B cell (primary cell): ENCODE measurements at regions of chr2 and their contacts with region 1.

Region 1: GRCh38 chr2:24084386-24085361 is at the start of gene TP53I3:
- DNase-seq: peak; percentile 89
- ATAC-seq: peak; percentile 86
- H3K4me3 ChIP-seq: peak within 1 kb of the TSS; percentile 36 to 84 (median 68)
- H3K4me3 Mint-ChIP-seq: peak within 1 kb of the TSS; percentile 97
- H3K27ac ChIP-seq: peak within 1 kb of the TSS; percentile 58 to 69
- H3K27ac Mint-ChIP-seq: peak within 1 kb of the TSS; percentile 95
- H3K4me1 ChIP-seq: peaks cover 12 to 20% of the 10 kb centered on the region in 2 donors
- H3K4me1 Mint-ChIP-seq: peaks cover 19% of the 10 kb centered on the region
- H3K27me3 ChIP-seq: no peaks in the 10 kb centered on the region
- H3K27me3 Mint-ChIP-seq: no peaks in the 10 kb centered on the region
- CTCF ChIP-seq: peak; percentile 98
- total RNA-seq, gene TP53I3: 3.9 and 5.2 TPM in 2 replicates

Region 2: DNA sequence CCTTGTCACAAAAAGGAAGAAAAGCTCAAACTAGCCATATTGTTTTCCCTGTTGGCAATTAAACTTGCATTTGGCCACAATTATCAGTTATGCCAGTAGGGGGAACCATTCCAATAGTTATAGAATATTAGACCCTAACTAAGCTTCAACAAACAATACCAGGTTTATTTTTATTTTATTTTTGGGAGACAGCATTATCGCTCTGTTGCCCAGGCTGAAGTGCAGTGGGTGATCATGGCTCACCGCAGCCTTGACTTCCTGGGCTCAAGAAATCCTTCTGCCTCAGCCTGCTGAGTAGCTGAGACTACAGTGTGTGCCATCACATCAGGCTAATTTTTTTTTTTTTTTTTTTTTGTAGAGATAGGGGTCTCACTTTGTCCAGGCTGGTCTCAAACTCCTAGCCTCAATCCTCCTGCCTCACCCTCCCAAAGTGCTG is 259.9 kb before region 1 on chr2:
- CTCF ChIA-PET with region 1: interaction called, 154 read pairs
- POLR2A ChIA-PET with region 1: interaction called, 3 read pairs
- intact Hi-C with region 1: loop called (anchors 1 kb)
- DNase-seq: peak; percentile 76
- ATAC-seq: peak; percentile 41
- H3K4me3 ChIP-seq: no peak overlapping the region
- H3K4me3 Mint-ChIP-seq: no peak overlapping the region
- H3K27ac ChIP-seq: no peak overlapping the region
- H3K27ac Mint-ChIP-seq: no peak overlapping the region
- H3K4me1 ChIP-seq: no peaks in the 10 kb centered on the region
- H3K4me1 Mint-ChIP-seq: no peaks in the 10 kb centered on the region
- H3K27me3 ChIP-seq: no peaks in the 10 kb centered on the region
- H3K27me3 Mint-ChIP-seq: no peaks in the 10 kb centered on the region
- CTCF ChIP-seq: peak; percentile 91

Region 3: GRCh38 chr2:23939987-23940717 is 144.5 kb before region 1 on chr2 and contains the start of gene UBXN2A:
- CTCF ChIA-PET with region 1: interaction called, 6 read pairs
- POLR2A ChIA-PET with region 1: interaction called, 10 read pairs
- intact Hi-C with region 1: no loop called
- DNase-seq: peak; percentile 91
- ATAC-seq: peak; percentile 84
- H3K4me3 ChIP-seq: peak within 1 kb of the TSS; percentile 65 to 91 (median 80)
- H3K4me3 Mint-ChIP-seq: peak within 1 kb of the TSS; percentile 91
- H3K27ac ChIP-seq: peak within 1 kb of the TSS; percentile 36 to 72
- H3K27ac Mint-ChIP-seq: peak within 1 kb of the TSS; percentile 85
- H3K4me1 ChIP-seq: peaks cover 12 to 18% of the 10 kb centered on the region in 2 donors
- H3K4me1 Mint-ChIP-seq: peaks cover 21% of the 10 kb centered on the region
- H3K27me3 ChIP-seq: no peaks in the 10 kb centered on the region
- H3K27me3 Mint-ChIP-seq: no peaks in the 10 kb centered on the region
- CTCF ChIP-seq: no peak
- total RNA-seq, gene UBXN2A: 13.4 and 14.2 TPM in 2 replicates

Region 4: DNA sequence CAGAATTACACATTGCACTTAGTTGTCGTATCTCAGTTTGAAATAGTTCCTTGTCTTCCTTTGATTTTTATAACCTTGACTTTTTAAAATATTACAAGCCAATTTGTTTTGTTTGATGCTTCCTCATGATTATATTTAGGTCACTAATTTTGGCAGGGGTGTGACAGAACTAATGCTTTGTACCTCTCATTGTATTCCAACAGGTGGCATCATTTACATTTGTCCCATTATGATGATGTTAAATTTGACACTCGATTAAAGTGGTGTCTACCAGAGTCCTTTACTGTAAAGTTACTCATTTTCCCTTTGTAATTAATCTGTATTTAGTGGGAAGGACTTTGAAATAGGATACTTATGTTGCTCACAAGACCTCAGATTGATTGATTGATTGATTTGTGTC is 96.3 kb before region 1 on chr2:
- CTCF ChIA-PET with region 1: interaction called, 7 read pairs
- POLR2A ChIA-PET with region 1: no interaction called
- intact Hi-C with region 1: loop called (anchors 1 kb)
- DNase-seq: peak; percentile 38
- ATAC-seq: peak; percentile 45
- H3K4me3 ChIP-seq: no peak overlapping the region
- H3K4me3 Mint-ChIP-seq: no peak overlapping the region
- H3K27ac ChIP-seq: no peak overlapping the region
- H3K27ac Mint-ChIP-seq: no peak overlapping the region
- H3K4me1 ChIP-seq: no peaks in the 10 kb centered on the region
- H3K4me1 Mint-ChIP-seq: no peaks in the 10 kb centered on the region
- H3K27me3 ChIP-seq: no peaks in the 10 kb centered on the region
- H3K27me3 Mint-ChIP-seq: no peaks in the 10 kb centered on the region
- CTCF ChIP-seq: peak; percentile 51

Region 5: DNA sequence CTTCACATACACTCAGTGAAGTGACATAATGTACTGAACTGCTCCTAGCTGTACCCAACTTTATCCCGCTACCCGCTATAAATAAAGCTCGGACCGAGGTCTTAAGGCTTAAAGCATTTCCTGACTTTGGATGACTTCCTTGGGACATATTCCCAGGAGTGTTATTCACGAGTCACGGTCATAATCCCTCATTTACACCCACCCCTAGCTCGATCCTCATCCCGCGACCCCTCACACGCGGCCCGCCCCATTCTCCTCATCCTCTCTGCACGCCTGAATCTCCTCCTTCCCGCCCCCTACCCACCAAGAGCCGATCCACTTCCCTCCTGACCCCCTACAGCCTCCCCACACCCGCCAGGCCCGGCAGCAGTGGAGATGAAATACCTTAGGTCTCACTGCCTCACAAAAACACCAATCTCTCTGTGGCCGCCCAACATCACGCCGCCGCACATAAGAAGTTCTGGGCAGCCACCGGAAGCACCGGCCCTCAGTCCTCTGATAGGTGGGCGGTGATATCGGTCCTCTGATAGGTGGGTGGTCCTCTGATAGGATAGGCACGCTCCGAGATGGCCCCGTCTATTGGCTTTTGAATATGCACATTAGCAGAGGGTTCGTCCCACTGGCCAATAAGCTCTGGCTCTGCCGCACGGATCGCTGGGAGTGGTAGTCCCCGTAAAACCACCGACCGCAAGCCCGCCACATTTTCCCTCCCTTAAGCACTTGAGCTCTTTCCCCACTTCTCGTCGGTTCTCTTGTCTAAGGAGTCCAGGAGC is 37.6 kb before region 1 on chr2 and contains the start of gene WDCP:
- CTCF ChIA-PET with region 1: interaction called, 18 read pairs
- POLR2A ChIA-PET with region 1: no interaction called
- intact Hi-C with region 1: loop called (anchors 2 kb)
- DNase-seq: peak; percentile 95
- ATAC-seq: peak; percentile 99
- H3K4me3 ChIP-seq: peak within 1 kb of the TSS; percentile 53 to 92 (median 79)
- H3K4me3 Mint-ChIP-seq: peak within 1 kb of the TSS; percentile 90
- H3K27ac ChIP-seq: peak within 1 kb of the TSS in 1 of 2 donors; percentile 79
- H3K27ac Mint-ChIP-seq: peak within 1 kb of the TSS; percentile 86
- H3K4me1 ChIP-seq: peaks cover 24 to 26% of the 10 kb centered on the region in 2 donors
- H3K4me1 Mint-ChIP-seq: peaks cover 25% of the 10 kb centered on the region
- H3K27me3 ChIP-seq: peaks cover 0 to 20% (median 2%) of the 10 kb centered on the region in 4 experiments
- H3K27me3 Mint-ChIP-seq: no peaks in the 10 kb centered on the region
- CTCF ChIP-seq: no peak
- total RNA-seq, gene WDCP: 21.6 and 22.3 TPM in 2 replicates

Region 6: GRCh38 chr2:24123195-24123921 is 38.7 kb after region 1 on chr2 and contains the starts of genes FAM228B and PFN4:
- CTCF ChIA-PET with region 1: interaction called, 23 read pairs
- POLR2A ChIA-PET with region 1: no interaction called
- intact Hi-C with region 1: loop called (anchors 1 kb)
- DNase-seq: peak; percentile 87
- ATAC-seq: peak; percentile 94
- H3K4me3 ChIP-seq: peak within 1 kb of the TSS; percentile 62 to 80 (median 73)
- H3K4me3 Mint-ChIP-seq: peak within 1 kb of the TSS; percentile 90
- H3K27ac ChIP-seq: peak within 1 kb of the TSS; percentile 70 to 80
- H3K27ac Mint-ChIP-seq: peak within 1 kb of the TSS; percentile 95
- H3K4me1 ChIP-seq: peaks cover 5 to 18% of the 10 kb centered on the region in 2 donors
- H3K4me1 Mint-ChIP-seq: peaks cover 20% of the 10 kb centered on the region
- H3K27me3 ChIP-seq: no peaks in the 10 kb centered on the region
- H3K27me3 Mint-ChIP-seq: no peaks in the 10 kb centered on the region
- CTCF ChIP-seq: no peak
- total RNA-seq, gene FAM228B: 47.2 and 49.6 TPM in 2 replicates
- total RNA-seq, gene PFN4: 0.39 and 0.66 TPM in 2 replicates

Region 7: GRCh38 chr2:24262421-24262970 is 177.8 kb after region 1 on chr2:
- CTCF ChIA-PET with region 1: no interaction called
- POLR2A ChIA-PET with region 1: no interaction called
- intact Hi-C with region 1: no loop called
- DNase-seq: no peak
- ATAC-seq: no peak
- H3K4me3 ChIP-seq: no peak overlapping the region
- H3K4me3 Mint-ChIP-seq: no peak overlapping the region
- H3K27ac ChIP-seq: peak overlapping the region in 1 of 2 donors; percentile 61
- H3K27ac Mint-ChIP-seq: peak overlapping the region; percentile 38
- H3K4me1 ChIP-seq: no peaks in the 10 kb centered on the region
- H3K4me1 Mint-ChIP-seq: peaks cover 14% of the 10 kb centered on the region
- H3K27me3 ChIP-seq: no peaks in the 10 kb centered on the region
- H3K27me3 Mint-ChIP-seq: no peaks in the 10 kb centered on the region
- CTCF ChIP-seq: no peak